ENCODE measurements at regions of chr3 and their contacts with region 1.

Region 1: DNA sequence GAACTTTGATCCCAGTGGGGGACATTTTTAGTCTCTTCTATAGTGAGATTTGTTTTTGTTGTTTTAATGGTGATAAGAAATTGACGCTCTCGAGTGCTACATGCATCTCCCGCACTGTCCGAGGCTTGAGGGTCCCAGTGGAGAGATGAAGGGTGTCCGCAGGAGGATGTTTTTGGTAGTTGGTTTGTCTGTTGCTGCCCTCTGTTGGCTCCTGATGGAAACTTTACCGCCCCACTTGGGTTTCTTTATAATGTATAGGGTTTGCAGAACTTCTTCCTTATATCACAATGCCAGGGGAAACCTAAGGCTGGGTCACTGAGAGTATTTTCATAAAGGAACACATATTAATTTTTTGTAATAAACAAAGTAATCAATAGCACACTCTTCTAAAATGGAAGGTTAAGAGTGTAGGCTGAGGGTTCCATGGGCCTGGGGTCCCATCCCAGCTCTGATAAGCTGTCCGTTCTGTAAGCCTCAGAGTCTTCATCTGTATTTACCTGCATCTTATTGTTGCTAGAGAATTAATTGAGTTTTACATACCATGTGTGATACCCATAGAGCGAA is 185.3 kb upstream of the FEZF2 start:
- DNase-seq: no peak
- H3K4me3 ChIP-seq: no peak overlapping the region
- CTCF ChIP-seq: no peak
- POLR2A ChIP-seq: no peak

Region 2: DNA sequence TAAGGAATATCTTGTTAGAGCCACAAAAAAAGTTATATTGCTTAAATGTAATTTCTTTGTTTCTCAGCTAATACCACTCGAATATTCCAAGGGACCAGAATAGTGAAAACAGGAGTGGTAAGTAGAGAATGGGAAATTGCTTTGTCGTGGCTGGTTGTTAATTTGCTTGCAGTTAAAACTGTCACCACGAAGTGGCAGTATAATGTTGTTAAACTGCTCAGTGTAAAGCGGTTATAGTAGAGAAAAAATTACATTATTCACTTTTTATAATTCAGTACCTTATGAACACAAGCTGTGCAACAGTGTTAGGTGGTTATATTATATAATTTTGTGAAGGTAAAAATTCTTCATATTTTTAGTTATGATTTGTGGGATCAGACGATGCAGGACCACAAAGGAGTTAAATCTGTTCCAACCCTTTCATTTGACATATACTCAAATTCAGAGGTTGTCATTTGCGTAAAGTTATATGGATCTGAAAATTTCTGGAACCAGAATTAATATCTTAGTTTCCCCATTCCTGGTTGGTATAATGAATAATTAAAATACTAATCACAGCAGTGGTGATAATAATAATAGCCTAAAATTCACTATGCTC is 357.1 kb before region 1 on chr3:
- intact Hi-C with region 1: loop called (anchors 10 kb)
- DNase-seq: no peak
- H3K4me3 ChIP-seq: no peak overlapping the region
- CTCF ChIP-seq: no peak
- POLR2A ChIP-seq: no peak

Region 3: GRCh38 chr3:62368705-62369475 is 189.7 kb before region 1 on chr3:
- intact Hi-C with region 1: no loop called
- DNase-seq: no peak
- H3K4me3 ChIP-seq: no peak overlapping the region
- CTCF ChIP-seq: no peak
- POLR2A ChIP-seq: no peak